AG04449 (cell line): ENCODE measurements at regions of chr20 and their contacts with region 1.

Region 1: GRCh38 chr20:44115762-44116644 is 71.0 kb downstream of the JPH2 start:
- DNase-seq: no peak
- H3K4me3 ChIP-seq: no peak overlapping the region
- CTCF ChIP-seq: no peak

Region 2: GRCh38 chr20:44011251-44011940 is 104.6 kb before region 1 on chr20:
- CTCF ChIA-PET with region 1: no interaction called
- POLR2A ChIA-PET with region 1: no interaction called
- DNase-seq: no peak
- H3K4me3 ChIP-seq: no peak overlapping the region
- CTCF ChIP-seq: no peak

Region 3: GRCh38 chr20:44041001-44041400 is 75.0 kb before region 1 on chr20:
- CTCF ChIA-PET with region 1: no interaction called
- POLR2A ChIA-PET with region 1: no interaction called
- DNase-seq: no peak
- H3K4me3 ChIP-seq: no peak overlapping the region
- CTCF ChIP-seq: no peak

Region 4: GRCh38 chr20:44104798-44105517 is 11.0 kb before region 1 on chr20:
- CTCF ChIA-PET with region 1: interaction called, 46 read pairs
- POLR2A ChIA-PET with region 1: no interaction called
- DNase-seq: no peak
- H3K4me3 ChIP-seq: no peak overlapping the region
- CTCF ChIP-seq: no peak

Region 5: DNA sequence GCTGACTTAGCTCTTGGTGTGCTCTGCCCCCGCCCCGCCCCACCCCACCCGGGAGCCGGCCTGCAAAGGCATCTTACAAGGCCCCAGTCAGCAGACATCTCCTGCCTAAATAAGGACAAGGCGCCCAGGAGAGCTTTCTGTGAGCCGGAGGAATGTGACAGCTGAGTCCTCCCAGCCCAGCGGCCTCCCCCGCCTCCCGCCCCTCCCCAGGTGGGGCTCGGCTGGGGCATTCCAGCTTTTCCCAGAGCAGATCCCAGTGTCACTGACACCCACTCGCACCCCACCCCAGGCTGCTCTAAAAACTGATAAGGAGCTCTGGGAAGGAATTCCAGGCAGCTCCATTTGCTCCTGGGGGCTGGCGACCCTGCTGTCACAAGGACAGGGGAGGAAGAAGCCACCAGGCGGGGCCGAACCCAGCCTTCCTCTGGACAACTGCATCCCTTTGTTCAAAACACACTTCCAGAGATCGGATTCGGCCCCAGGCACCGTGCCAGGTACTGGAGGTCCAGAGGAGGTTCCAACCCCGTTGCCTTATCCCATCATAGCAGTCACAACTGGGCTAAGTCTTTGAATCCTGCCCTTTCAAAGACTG is 21.3 kb after region 1 on chr20:
- CTCF ChIA-PET with region 1: interaction called, 80 read pairs
- POLR2A ChIA-PET with region 1: no interaction called
- DNase-seq: peak; percentile 36
- H3K4me3 ChIP-seq: no peak overlapping the region
- CTCF ChIP-seq: no peak

Region 6: GRCh38 chr20:44166477-44166876 is 50.5 kb after region 1 on chr20:
- CTCF ChIA-PET with region 1: interaction called, 23 read pairs
- POLR2A ChIA-PET with region 1: no interaction called
- DNase-seq: no peak
- H3K4me3 ChIP-seq: no peak overlapping the region
- CTCF ChIP-seq: no peak

Region 7: GRCh38 chr20:44210422-44211176 is 94.6 kb after region 1 on chr20 and contains the start of gene OSER1:
- CTCF ChIA-PET with region 1: interaction called, 58 read pairs
- POLR2A ChIA-PET with region 1: no interaction called
- DNase-seq: no peak
- H3K4me3 ChIP-seq: peak within 1 kb of the TSS; percentile 89
- CTCF ChIP-seq: no peak